ENCODE measurements at regions of chr1 and their contacts with region 1.

Region 1: GRCh38 chr1:33472349-33472980 is at the start of gene ZSCAN20:
- DNase-seq: peak; percentile 99
- H3K4me3 ChIP-seq: peak within 1 kb of the TSS; percentile 69 to 72 (median 70)
- H3K27ac ChIP-seq: peak within 1 kb of the TSS; percentile 75 to 84 (median 80)
- H3K4me1 ChIP-seq: peaks cover 27 to 56% (median 41%) of the 10 kb centered on the region in 4 donors
- H3K27me3 ChIP-seq: no peaks in the 10 kb centered on the region
- CTCF ChIP-seq: peak in 2 of 3 experiments; percentile 12 to 28
- EP300 ChIP-seq: no peak
- POLR2A ChIP-seq: no peak
- total RNA-seq, gene ZSCAN20: 6.6 to 8.2 (median 7.7) TPM

Region 2: GRCh38 chr1:33127001-33127791 is 345.3 kb before region 1 on chr1:
- intact Hi-C with region 1: loop called (anchors 10 kb)
- DNase-seq: peak; percentile 100
- H3K4me3 ChIP-seq: peak overlapping the region; percentile 61 to 74 (median 66)
- H3K27ac ChIP-seq: peak overlapping the region; percentile 77 to 85 (median 80)
- H3K4me1 ChIP-seq: peaks cover 17 to 31% (median 24%) of the 10 kb centered on the region in 4 donors
- H3K27me3 ChIP-seq: no peaks in the 10 kb centered on the region
- CTCF ChIP-seq: peak; percentile 91 to 97 (median 91)
- EP300 ChIP-seq: no peak
- POLR2A ChIP-seq: no peak

Region 3: DNA sequence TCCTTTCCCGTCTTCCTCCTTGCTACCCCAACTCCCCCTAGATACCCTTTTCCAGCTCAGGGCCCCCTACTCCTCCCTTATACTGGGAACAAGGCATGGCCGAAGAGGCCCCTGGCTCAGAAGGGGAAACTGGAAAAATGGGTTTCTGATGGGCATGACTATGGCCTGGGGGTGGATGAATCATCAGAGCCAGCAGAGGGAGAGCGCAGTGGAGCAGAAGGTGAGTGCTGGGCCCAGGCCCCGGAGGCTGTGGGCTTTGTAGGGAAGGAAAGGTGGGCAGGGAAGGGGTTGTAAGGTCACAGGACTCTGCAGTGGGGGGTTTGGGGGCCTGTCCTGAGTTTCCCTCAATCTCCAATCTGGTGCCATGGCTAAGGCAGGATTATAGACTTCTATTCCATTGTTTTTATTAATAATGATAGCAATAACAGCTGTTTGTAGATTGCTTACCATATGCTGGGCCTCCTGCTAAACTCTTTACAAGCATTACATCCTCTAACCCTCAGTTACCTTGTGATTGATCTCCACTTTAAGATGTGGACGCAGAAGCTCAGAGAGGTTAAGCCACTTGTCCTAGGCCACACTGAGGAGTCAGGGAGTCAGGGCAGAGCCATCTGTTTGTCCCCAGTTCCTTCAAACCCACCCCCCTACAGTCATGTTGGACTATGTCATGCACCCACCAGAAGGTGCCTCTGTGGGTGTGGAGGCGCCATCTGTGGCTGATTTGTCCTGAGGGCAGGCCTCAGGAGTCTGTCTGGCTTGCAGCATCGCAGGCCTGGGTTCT is 252.4 kb before region 1 on chr1:
- intact Hi-C with region 1: loop called (anchors 5 kb)
- DNase-seq: peak; percentile 47
- H3K4me3 ChIP-seq: no peak overlapping the region
- H3K27ac ChIP-seq: no peak overlapping the region
- H3K4me1 ChIP-seq: no peaks in the 10 kb centered on the region
- H3K27me3 ChIP-seq: no peaks in the 10 kb centered on the region
- CTCF ChIP-seq: no peak
- EP300 ChIP-seq: no peak
- POLR2A ChIP-seq: no peak

Region 4: GRCh38 chr1:33367485-33368405 is 104.7 kb before region 1 on chr1:
- intact Hi-C with region 1: loop called (anchors 5 kb)
- DNase-seq: no peak
- H3K4me3 ChIP-seq: peak overlapping the region in 1 of 4 donors; percentile 7
- H3K27ac ChIP-seq: peak overlapping the region; percentile 48 to 79 (median 66)
- H3K4me1 ChIP-seq: peaks cover 52 to 60% (median 56%) of the 10 kb centered on the region in 4 donors
- H3K27me3 ChIP-seq: no peaks in the 10 kb centered on the region
- CTCF ChIP-seq: peak; percentile 95 to 99 (median 98)
- EP300 ChIP-seq: no peak
- POLR2A ChIP-seq: no peak